Heart left ventricle (tissue), 16 donors: ENCODE measurements at regions of chr17 and their contacts with region 1.

Region 1: DNA sequence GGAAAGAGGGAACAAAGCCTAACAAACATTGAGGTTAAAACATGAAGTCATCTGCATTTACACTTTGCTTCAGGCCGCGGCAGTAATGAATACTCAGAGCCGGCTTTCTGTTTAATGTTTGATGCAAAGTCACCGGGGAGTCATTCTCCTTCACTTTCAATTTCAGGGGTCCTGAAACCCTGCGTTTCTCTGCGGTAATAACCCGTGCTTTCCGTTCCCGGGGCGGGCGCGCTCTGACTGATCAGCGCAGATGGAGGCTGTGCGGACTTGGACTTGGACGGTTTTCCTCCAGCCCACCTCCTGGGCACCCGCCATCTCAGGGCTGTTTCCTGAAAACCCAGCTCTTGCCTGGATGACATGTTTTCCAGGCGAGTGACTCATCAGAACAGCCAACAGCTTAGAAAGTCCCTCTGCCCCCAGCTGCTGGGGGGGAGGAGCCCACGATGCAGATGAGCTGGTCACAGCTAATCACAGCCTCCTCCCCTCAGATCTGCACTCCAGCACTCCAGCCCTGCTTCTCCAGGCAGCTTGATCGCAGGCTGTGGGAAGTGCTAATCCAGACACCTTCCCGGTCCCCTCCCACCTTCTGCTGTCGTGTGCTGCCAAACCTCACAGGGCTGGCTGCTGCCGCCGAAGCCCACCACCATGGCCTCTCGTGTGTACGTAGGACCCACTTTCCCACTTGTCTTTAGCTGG is 158.6 kb upstream of the CHMP6 start:
- DNase-seq: peak; percentile 84 to 93 (median 87)
- ATAC-seq: peak; percentile 90 to 97 (median 97)
- H3K4me3 ChIP-seq: peak overlapping the region in 11 of 12 donors; percentile 20 to 60 (median 54)
- H3K27ac ChIP-seq: peak overlapping the region; percentile 24 to 95 (median 82)
- H3K4me1 ChIP-seq: peaks cover 0 to 23% (median 13%) of the 10 kb centered on the region in 12 donors
- H3K27me3 ChIP-seq: no peaks in the 10 kb centered on the region
- CTCF ChIP-seq: no peak
- POLR2A ChIP-seq: peak in 1 of 2 donors; percentile 46

Region 2: GRCh38 chr17:80791758-80792284 is 41.2 kb before region 1 on chr17:
- intact Hi-C with region 1: loop called in 1 of 10 experiments (anchors 5 kb)
- DNase-seq: peak in 3 of 5 donors; percentile 41 to 75 (median 57)
- ATAC-seq: peak; percentile 22 to 72 (median 48)
- H3K4me3 ChIP-seq: no peak overlapping the region
- H3K27ac ChIP-seq: peak overlapping the region in 2 of 12 donors; percentile 24 to 70
- H3K4me1 ChIP-seq: peaks cover 0 to 54% (median 23%) of the 10 kb centered on the region in 12 donors
- H3K27me3 ChIP-seq: no peaks in the 10 kb centered on the region
- CTCF ChIP-seq: no peak
- POLR2A ChIP-seq: no peak